GM12878 (cell line): ENCODE measurements at regions of chr10 and their contacts with region 1.

Region 1: GRCh38 chr10:113982769-113983168 is 60.9 kb upstream of the ADRB1 start:
- DNase-seq: no peak
- ATAC-seq: peak; percentile 94
- H3K4me3 ChIP-seq: no peak overlapping the region
- H3K27ac ChIP-seq: peak overlapping the region; percentile 60
- H3K4me1 ChIP-seq: peaks cover 21% of the 10 kb centered on the region
- H3K27me3 ChIP-seq: no peaks in the 10 kb centered on the region
- CTCF ChIP-seq: no peak
- EP300 ChIP-seq: no peak
- POLR2A ChIP-seq: no peak
- RAD21 ChIP-seq: no peak

Region 2: DNA sequence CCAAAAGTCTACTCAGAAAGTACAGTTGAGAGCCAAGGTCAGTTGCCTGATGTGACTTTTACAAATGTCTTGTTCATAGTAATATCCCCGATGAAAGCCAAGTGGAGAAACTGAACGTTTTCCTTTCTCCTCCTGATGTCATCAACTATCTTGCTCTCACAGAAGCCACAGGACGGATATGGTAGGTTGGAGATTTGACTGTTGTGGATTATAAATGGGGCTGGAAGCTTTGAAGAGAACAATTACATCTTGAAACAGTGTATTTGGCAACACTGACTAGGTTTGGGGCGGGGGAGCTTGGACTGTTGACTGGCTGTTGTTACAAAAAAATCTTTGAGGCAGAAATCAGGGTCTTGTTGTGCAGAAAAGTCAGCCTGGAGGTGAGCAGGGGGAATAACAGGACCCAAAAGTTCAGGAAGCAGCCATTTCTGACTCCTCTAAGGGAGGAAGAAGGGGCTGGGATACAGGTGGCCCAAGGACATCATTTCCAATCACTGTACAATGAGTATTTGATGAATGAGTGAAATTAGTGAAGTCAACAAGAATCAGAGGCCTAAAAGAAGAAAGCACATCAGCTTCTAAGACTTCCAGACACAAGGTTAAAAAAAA is 207.0 kb before region 1 on chr10:
- CTCF ChIA-PET with region 1: no interaction called
- POLR2A ChIA-PET with region 1: no interaction called
- RAD21 ChIA-PET with region 1: no interaction called
- SMC1A ChIA-PET with region 1: no interaction called
- in situ Hi-C with region 1: no loop called
- intact Hi-C with region 1: no loop called
- DNase-seq: no peak
- ATAC-seq: no peak
- H3K4me3 ChIP-seq: no peak overlapping the region
- H3K27ac ChIP-seq: no peak overlapping the region
- H3K4me1 ChIP-seq: no peaks in the 10 kb centered on the region
- H3K27me3 ChIP-seq: no peaks in the 10 kb centered on the region; a peak in 1 of 4 replicates
- CTCF ChIP-seq: no peak
- EP300 ChIP-seq: no peak
- POLR2A ChIP-seq: no peak
- RAD21 ChIP-seq: no peak

Region 3: GRCh38 chr10:113965683-113966082 is 17.1 kb before region 1 on chr10:
- CTCF ChIA-PET with region 1: interaction called, 6 read pairs
- POLR2A ChIA-PET with region 1: interaction called, 12 read pairs
- RAD21 ChIA-PET with region 1: interaction called, 26 read pairs
- SMC1A ChIA-PET with region 1: interaction called, 32 read pairs
- in situ Hi-C with region 1: no loop called
- intact Hi-C with region 1: no loop called
- DNase-seq: no peak
- ATAC-seq: peak; percentile 56
- H3K4me3 ChIP-seq: no peak overlapping the region
- H3K27ac ChIP-seq: peak overlapping the region; percentile 43; the same call in 1 of the 2 replicates
- H3K4me1 ChIP-seq: peaks cover 38% of the 10 kb centered on the region
- H3K27me3 ChIP-seq: no peaks in the 10 kb centered on the region
- CTCF ChIP-seq: no peak
- EP300 ChIP-seq: no peak
- POLR2A ChIP-seq: no peak
- RAD21 ChIP-seq: no peak

Region 4: DNA sequence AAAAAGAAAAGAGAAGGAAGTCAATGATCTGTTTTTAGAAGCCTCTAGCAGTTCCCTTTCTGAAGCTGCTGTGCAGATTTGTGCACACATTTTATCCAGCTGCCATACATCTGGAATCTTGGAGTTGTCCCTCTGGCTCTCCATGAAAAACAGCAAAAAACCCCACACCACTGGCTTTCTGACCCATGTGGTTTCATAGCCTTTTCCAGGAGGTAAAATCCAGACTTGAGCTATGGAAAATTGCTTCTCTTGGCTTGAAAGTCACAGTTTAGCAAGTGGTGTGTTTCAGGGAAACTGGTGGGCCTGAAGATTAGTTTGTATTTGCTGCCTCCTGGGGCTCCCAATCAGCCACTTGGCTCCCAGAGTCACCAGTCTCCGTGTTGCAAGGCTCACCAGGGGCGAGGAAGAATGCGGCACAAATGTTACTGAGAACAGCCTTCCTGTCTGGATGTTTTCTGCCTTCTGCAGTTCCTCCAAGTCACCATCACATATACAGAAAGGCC is 10.8 kb after region 1 on chr10:
- CTCF ChIA-PET with region 1: interaction called, 3 read pairs
- POLR2A ChIA-PET with region 1: no interaction called
- RAD21 ChIA-PET with region 1: no interaction called
- SMC1A ChIA-PET with region 1: interaction called, 15 read pairs
- in situ Hi-C with region 1: no loop called
- intact Hi-C with region 1: no loop called
- DNase-seq: no peak
- ATAC-seq: no peak; the same call in 2 of the 3 replicates
- H3K4me3 ChIP-seq: no peak overlapping the region
- H3K27ac ChIP-seq: no peak overlapping the region
- H3K4me1 ChIP-seq: peaks cover 8% of the 10 kb centered on the region
- H3K27me3 ChIP-seq: peaks cover 0 to 1% of the 10 kb centered on the region in 2 experiments; a peak in 2 of 4 replicates
- CTCF ChIP-seq: 0 out of 6 replicates have a peak, but pooled peaks of 1 of the 3 experiments have one; percentile 13
- EP300 ChIP-seq: no peak
- POLR2A ChIP-seq: no peak
- RAD21 ChIP-seq: 0 out of 2 replicates have a peak, but pooled peaks have one; percentile 19

Region 5: GRCh38 chr10:114087255-114087654 is 104.5 kb after region 1 on chr10:
- CTCF ChIA-PET with region 1: no interaction called
- POLR2A ChIA-PET with region 1: no interaction called
- RAD21 ChIA-PET with region 1: no interaction called
- SMC1A ChIA-PET with region 1: no interaction called
- in situ Hi-C with region 1: no loop called
- intact Hi-C with region 1: no loop called
- DNase-seq: no peak
- ATAC-seq: peak; percentile 26; the same call in 1 of the 3 replicates
- H3K4me3 ChIP-seq: no peak overlapping the region
- H3K27ac ChIP-seq: no peak overlapping the region
- H3K4me1 ChIP-seq: no peaks in the 10 kb centered on the region
- H3K27me3 ChIP-seq: no peaks in the 10 kb centered on the region
- CTCF ChIP-seq: peak in 2 of 3 experiments; percentile 14 to 27; a peak in 2 of 6 replicates
- EP300 ChIP-seq: no peak
- POLR2A ChIP-seq: no peak
- RAD21 ChIP-seq: 0 out of 2 replicates have a peak, but pooled peaks have one; percentile 13